Caco-2 (cell line): ENCODE measurements at regions of chr15 and their contacts with region 1.

Region 1: GRCh38 chr15:88904624-88905327 is 8.4 kb downstream of the MFGE8 start:
- DNase-seq: peak; percentile 82 to 88
- H3K4me3 ChIP-seq: no peak overlapping the region
- H3K4me3 Mint-ChIP-seq: peak overlapping the region; percentile 3
- H3K27ac Mint-ChIP-seq: no peak overlapping the region
- H3K4me1 ChIP-seq: peaks cover 14% of the 10 kb centered on the region; the same call in 1 of the 2 replicates
- H3K4me1 Mint-ChIP-seq: peaks cover 19% of the 10 kb centered on the region
- H3K27me3 ChIP-seq: no peaks in the 10 kb centered on the region
- H3K27me3 Mint-ChIP-seq: no peaks in the 10 kb centered on the region
- CTCF ChIP-seq: peak; percentile 93 to 95

Region 2: GRCh38 chr15:88959445-88959844 is 54.7 kb after region 1 on chr15:
- CTCF ChIA-PET with region 1: no interaction called
- POLR2A ChIA-PET with region 1: no interaction called
- intact Hi-C with region 1: no loop called
- DNase-seq: no peak
- H3K4me3 ChIP-seq: no peak overlapping the region
- H3K4me3 Mint-ChIP-seq: no peak overlapping the region
- H3K27ac Mint-ChIP-seq: no peak overlapping the region
- H3K4me1 ChIP-seq: no peaks in the 10 kb centered on the region
- H3K4me1 Mint-ChIP-seq: no peaks in the 10 kb centered on the region
- H3K27me3 ChIP-seq: no peaks in the 10 kb centered on the region
- H3K27me3 Mint-ChIP-seq: no peaks in the 10 kb centered on the region
- CTCF ChIP-seq: no peak

Region 3: DNA sequence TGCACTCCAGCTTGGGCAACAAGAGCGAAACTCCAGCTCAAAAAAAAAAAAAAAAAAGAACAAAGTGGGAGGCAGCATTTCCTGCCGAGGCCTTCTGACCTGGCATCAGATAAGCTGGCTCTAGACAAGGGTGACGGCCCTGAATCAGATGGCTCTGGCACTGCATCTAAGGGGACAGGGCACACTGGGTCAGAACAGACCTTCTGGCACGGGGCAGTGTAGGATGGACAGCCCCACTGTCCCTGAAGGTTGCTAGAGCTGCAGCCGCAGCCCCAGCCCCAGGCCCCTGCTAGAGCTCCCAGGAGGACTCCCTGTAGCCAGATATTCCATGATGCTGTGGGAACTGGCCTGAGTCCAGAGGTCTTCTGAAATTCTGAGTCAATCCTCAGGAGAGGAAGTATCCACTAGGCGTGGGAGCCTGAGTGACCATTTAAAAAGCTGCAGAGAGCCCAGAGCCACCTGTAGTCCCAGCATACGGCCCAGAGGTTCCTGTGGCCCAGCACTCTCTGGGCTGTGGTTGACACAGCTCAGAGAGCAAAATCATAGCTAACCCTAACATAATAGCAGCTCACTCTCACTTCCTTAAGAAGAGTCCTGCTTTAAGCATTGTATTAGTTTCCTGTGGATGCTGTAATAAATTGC is 77.6 kb after region 1 on chr15:
- CTCF ChIA-PET with region 1: interaction called, 11 read pairs
- POLR2A ChIA-PET with region 1: no interaction called
- intact Hi-C with region 1: no loop called
- DNase-seq: peak in 1 of 2 experiments; percentile 49
- H3K4me3 ChIP-seq: no peak overlapping the region
- H3K4me3 Mint-ChIP-seq: peak overlapping the region; percentile 50
- H3K27ac Mint-ChIP-seq: peak overlapping the region; percentile 83
- H3K4me1 ChIP-seq: peaks cover 82% of the 10 kb centered on the region
- H3K4me1 Mint-ChIP-seq: peaks cover 29% of the 10 kb centered on the region
- H3K27me3 ChIP-seq: no peaks in the 10 kb centered on the region
- H3K27me3 Mint-ChIP-seq: no peaks in the 10 kb centered on the region
- CTCF ChIP-seq: no peak

Region 4: DNA sequence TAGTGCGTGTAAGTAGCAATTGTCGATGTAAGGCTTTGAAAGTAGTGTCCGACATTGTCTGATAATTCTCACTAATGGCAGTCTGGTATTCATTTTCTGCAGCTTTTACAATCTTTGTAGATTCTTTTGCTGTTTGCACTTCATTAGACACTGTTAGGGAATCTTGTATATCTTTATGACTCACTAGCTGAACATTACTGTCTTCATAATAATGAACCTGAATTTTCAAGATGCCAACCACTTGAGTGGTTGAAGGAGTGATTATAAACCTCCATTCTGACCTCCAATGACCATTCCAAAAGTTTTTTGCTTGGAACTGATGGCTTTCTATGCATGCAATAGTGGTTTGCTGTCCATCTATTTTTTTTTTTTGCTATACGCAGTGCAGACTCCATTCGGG is 84.8 kb after region 1 on chr15:
- CTCF ChIA-PET with region 1: interaction called, 11 read pairs
- POLR2A ChIA-PET with region 1: interaction called, 7 read pairs
- intact Hi-C with region 1: no loop called
- DNase-seq: no peak
- H3K4me3 ChIP-seq: peak overlapping the region; percentile 38
- H3K4me3 Mint-ChIP-seq: peak overlapping the region; percentile 73
- H3K27ac Mint-ChIP-seq: peak overlapping the region; percentile 83
- H3K4me1 ChIP-seq: peaks cover 85% of the 10 kb centered on the region
- H3K4me1 Mint-ChIP-seq: peaks cover 44% of the 10 kb centered on the region
- H3K27me3 ChIP-seq: no peaks in the 10 kb centered on the region
- H3K27me3 Mint-ChIP-seq: no peaks in the 10 kb centered on the region
- CTCF ChIP-seq: no peak

Region 5: GRCh38 chr15:89003865-89004725 is 99.3 kb after region 1 on chr15:
- CTCF ChIA-PET with region 1: interaction called, 48 read pairs
- POLR2A ChIA-PET with region 1: no interaction called
- intact Hi-C with region 1: loop called (anchors 1 kb)
- DNase-seq: peak; percentile 60 to 73
- H3K4me3 ChIP-seq: no peak overlapping the region
- H3K4me3 Mint-ChIP-seq: no peak overlapping the region
- H3K27ac Mint-ChIP-seq: no peak overlapping the region
- H3K4me1 ChIP-seq: peaks cover 16% of the 10 kb centered on the region
- H3K4me1 Mint-ChIP-seq: peaks cover 6% of the 10 kb centered on the region
- H3K27me3 ChIP-seq: no peaks in the 10 kb centered on the region
- H3K27me3 Mint-ChIP-seq: no peaks in the 10 kb centered on the region
- CTCF ChIP-seq: peak; percentile 43 to 49

Region 6: DNA sequence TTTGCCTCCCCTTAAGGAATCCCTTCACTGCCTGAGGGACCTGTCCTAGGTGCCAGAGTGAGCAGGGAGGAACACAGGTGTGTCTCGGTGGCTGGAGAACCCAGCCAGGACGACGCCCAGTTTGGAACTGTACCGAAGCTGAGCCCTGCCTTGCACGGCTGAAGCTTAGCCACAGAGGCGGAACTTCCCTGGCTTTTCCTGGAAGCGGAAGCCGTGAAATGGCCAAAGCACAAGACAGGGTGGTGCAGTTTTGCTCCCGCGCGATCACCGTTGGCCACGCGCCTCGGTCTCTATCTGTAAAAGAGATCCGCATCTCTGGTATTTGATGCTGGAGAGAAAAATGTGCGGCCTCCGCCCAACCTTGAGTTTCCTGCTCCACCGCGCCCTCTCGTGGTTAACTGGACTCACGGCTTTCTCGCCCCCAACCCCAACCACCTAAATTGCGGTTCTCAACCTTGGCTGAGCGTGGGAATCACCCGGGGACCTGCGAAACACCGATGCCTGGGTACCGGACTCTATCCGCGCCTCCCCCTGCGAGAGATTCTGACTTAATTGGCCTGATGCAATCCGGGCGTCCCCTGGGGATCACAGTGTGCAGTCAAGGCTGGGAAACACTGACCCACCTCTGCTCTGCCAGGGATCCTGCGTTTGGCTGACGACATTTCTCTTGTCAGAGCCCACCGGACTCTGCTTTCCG is 112.7 kb after region 1 on chr15:
- CTCF ChIA-PET with region 1: interaction called, 24 read pairs
- POLR2A ChIA-PET with region 1: no interaction called
- intact Hi-C with region 1: loop called (anchors 1 kb)
- DNase-seq: peak; percentile 83 to 88
- H3K4me3 ChIP-seq: peak overlapping the region; percentile 43
- H3K4me3 Mint-ChIP-seq: peak overlapping the region; percentile 73
- H3K27ac Mint-ChIP-seq: peak overlapping the region; percentile 39
- H3K4me1 ChIP-seq: no peaks in the 10 kb centered on the region
- H3K4me1 Mint-ChIP-seq: peaks cover 7% of the 10 kb centered on the region
- H3K27me3 ChIP-seq: no peaks in the 10 kb centered on the region
- H3K27me3 Mint-ChIP-seq: no peaks in the 10 kb centered on the region
- CTCF ChIP-seq: peak; percentile 75 to 84